ENCODE measurements at regions of chr20 and their contacts with region 1.

Region 1: DNA sequence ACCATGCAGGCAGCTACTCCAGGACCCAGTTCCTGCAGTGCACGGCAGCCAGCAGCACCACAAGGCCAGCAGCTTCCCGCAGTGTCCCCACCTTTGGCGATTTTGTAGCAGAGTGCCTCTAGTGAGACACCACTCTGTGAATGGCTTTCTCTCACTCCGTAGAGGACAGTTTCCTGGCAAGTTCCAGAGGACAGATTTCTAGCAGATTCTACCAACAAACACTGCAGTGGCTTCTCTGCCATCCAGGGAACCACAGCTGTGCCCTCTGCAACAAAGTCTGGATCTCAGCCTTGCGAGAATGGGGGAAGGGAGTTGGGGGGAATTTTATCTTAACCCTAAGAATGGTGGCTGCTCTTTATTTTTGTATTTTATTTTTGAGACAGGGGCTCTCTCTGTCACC is 28.7 kb downstream of the SNHG17 start:
- DNase-seq: no peak
- H3K4me3 ChIP-seq: no peak overlapping the region
- H3K27ac ChIP-seq: no peak overlapping the region
- H3K4me1 ChIP-seq: no peaks in the 10 kb centered on the region
- H3K27me3 ChIP-seq: no peaks in the 10 kb centered on the region
- CTCF ChIP-seq: no peak
- POLR2A ChIP-seq: no peak

Region 2: GRCh38 chr20:38337561-38338140 is 68.8 kb before region 1 on chr20:
- intact Hi-C with region 1: loop called (anchors 5 kb)
- DNase-seq: no peak
- H3K4me3 ChIP-seq: no peak overlapping the region
- H3K27ac ChIP-seq: no peak overlapping the region
- H3K4me1 ChIP-seq: peaks cover under 1% of the 10 kb centered on the region
- H3K27me3 ChIP-seq: no peaks in the 10 kb centered on the region
- CTCF ChIP-seq: peak in 1 of 3 experiments; percentile 9
- POLR2A ChIP-seq: no peak

Region 3: GRCh38 chr20:38645980-38646858 is 239.7 kb after region 1 on chr20:
- intact Hi-C with region 1: no loop called
- DNase-seq: no peak
- H3K4me3 ChIP-seq: peak overlapping the region in 1 of 2 donors; percentile 28
- H3K27ac ChIP-seq: no peak overlapping the region
- H3K4me1 ChIP-seq: peaks cover 8% of the 10 kb centered on the region
- H3K27me3 ChIP-seq: no peaks in the 10 kb centered on the region
- CTCF ChIP-seq: peak; percentile 74 to 77 (median 77)
- POLR2A ChIP-seq: no peak

Measured in vagina (tissue), 2 donors.